HEK293 (cell line): ENCODE measurements at regions of chr11 and their contacts with region 1.

Region 1: DNA sequence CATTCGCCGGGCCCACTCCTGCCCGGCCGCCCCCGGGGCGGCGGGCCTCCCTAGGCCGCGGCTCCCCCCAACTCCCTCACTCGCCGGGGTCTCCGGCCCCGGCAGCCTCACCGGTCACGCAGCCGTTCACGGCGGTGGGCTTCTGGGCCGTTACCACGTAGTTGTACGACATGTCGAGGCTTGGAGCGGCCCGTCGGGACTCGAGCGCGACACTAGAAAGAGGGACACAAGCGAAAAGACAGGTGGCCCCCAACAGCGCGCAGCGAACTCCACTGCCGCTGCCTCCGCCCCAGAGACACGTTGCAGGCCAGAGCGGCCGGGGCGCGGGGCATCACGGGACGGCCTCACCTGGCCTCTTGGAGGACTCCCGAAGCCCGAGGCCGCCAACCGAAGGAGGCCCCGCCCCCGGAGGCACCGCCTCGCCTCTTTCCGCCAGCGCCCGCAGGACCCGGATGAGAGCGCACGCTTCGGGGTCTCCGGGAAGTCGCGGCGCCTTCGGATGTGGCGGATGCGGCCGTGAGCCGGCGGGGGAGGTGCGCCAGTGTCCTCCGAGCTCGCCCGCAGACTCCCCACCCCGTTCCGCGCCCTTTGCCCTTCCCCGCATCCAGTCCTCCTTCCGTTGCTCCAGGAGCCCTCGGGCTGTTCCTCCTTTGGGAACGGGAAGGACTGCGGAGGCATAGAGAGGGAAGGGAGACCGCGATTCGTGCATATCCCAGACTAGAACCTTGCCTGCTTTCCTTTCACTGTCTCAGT is at the starts of genes DDB1 and TKFC:
- H3K4me3 ChIP-seq: peak within 1 kb of the TSS; percentile 99
- H3K27ac ChIP-seq: peak within 1 kb of the TSS; percentile 69
- H3K4me1 ChIP-seq: no peaks in the 10 kb centered on the region
- CTCF ChIP-seq: no peak; the same call in 1 of the 2 replicates

Region 2: GRCh38 chr11:61279934-61280659 is 52.9 kb before region 1 on chr11:
- CTCF ChIA-PET with region 1: no interaction called
- POLR2A ChIA-PET with region 1: no interaction called
- H3K4me3 ChIP-seq: no peak overlapping the region
- H3K27ac ChIP-seq: no peak overlapping the region
- H3K4me1 ChIP-seq: no peaks in the 10 kb centered on the region
- CTCF ChIP-seq: no peak

Region 3: DNA sequence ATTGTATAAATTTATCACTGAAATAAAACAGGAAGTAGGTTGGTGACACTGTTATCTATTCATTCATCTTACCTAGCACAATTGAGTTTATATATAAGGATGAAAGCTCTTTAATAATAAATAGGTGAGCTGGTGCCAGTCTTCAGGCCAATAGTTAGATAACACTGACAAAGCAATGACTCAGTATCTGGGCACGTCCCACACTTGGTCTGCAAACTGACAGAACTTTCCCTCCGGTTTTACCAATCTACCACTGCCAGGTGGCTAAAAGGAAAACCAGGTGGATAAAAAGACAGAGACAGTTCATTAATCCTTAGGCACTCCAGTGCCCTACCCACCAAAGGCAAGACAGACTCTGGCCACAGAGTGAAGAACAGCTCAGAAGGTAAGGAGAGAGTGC is 17.7 kb before region 1 on chr11:
- CTCF ChIA-PET with region 1: interaction called, 11 read pairs
- POLR2A ChIA-PET with region 1: interaction called, 3 read pairs
- H3K4me3 ChIP-seq: no peak overlapping the region
- H3K27ac ChIP-seq: no peak overlapping the region
- H3K4me1 ChIP-seq: no peaks in the 10 kb centered on the region
- CTCF ChIP-seq: no peak

Region 4: GRCh38 chr11:61361686-61362541 is 28.9 kb after region 1 on chr11 and contains the starts of genes CYB561A3 and TMEM138:
- CTCF ChIA-PET with region 1: interaction called, 69 read pairs
- POLR2A ChIA-PET with region 1: interaction called, 56 read pairs
- H3K4me3 ChIP-seq: peak within 1 kb of the TSS; percentile 65
- H3K27ac ChIP-seq: peak within 1 kb of the TSS; percentile 94
- H3K4me1 ChIP-seq: peaks cover 2% of the 10 kb centered on the region; the same call in 1 of the 2 replicates
- CTCF ChIP-seq: no peak

Region 5: GRCh38 chr11:61384271-61385242 is 51.6 kb after region 1 on chr11:
- CTCF ChIA-PET with region 1: interaction called, 210 read pairs
- POLR2A ChIA-PET with region 1: interaction called, 35 read pairs
- H3K4me3 ChIP-seq: no peak overlapping the region
- H3K27ac ChIP-seq: no peak overlapping the region
- H3K4me1 ChIP-seq: no peaks in the 10 kb centered on the region
- CTCF ChIP-seq: no peak

Region 6: DNA sequence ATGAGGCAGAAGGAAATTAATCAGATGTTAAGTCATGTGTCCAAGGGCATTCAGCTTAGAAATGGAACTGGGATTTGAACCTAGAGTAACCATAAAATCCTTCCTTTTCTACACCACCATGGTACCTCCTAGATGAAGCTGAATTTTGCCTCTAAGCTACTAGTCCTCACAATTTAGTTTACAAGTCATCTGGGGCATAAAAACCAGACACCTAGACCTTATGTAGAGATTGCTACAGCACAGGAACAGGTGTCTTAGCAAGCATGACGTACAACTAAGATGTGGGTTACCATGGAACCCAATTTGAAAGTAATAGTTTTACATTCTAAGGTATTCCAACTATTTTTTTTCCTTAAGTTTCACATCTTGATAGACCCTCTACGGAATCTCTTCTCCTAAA is 68.6 kb after region 1 on chr11:
- CTCF ChIA-PET with region 1: interaction called, 12 read pairs
- POLR2A ChIA-PET with region 1: no interaction called
- H3K4me3 ChIP-seq: no peak overlapping the region
- H3K27ac ChIP-seq: no peak overlapping the region
- H3K4me1 ChIP-seq: no peaks in the 10 kb centered on the region
- CTCF ChIP-seq: no peak

Region 7: DNA sequence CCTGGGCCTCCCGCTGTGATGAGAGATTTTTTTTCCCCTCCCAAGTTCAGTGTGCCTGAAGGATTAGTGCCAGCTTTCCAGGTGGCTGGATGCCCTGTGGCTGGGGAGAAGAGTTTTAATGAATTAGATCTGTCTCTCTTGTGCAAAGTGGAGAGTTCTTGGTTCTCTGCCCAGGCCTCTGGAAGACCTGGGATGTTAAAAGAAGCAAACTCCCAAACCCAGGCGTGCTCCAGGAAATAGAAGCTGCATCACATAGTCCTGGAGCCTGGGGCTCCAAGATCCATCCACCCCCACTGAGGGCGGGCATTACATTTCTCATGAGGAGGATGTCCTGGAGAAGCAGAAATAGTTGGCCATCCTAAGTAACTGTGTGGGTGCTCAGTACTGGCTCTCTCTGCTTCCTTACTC is 127.5 kb after region 1 on chr11:
- CTCF ChIA-PET with region 1: no interaction called
- POLR2A ChIA-PET with region 1: no interaction called
- H3K4me3 ChIP-seq: no peak overlapping the region
- H3K27ac ChIP-seq: no peak overlapping the region
- H3K4me1 ChIP-seq: no peaks in the 10 kb centered on the region
- CTCF ChIP-seq: no peak

Region 8: DNA sequence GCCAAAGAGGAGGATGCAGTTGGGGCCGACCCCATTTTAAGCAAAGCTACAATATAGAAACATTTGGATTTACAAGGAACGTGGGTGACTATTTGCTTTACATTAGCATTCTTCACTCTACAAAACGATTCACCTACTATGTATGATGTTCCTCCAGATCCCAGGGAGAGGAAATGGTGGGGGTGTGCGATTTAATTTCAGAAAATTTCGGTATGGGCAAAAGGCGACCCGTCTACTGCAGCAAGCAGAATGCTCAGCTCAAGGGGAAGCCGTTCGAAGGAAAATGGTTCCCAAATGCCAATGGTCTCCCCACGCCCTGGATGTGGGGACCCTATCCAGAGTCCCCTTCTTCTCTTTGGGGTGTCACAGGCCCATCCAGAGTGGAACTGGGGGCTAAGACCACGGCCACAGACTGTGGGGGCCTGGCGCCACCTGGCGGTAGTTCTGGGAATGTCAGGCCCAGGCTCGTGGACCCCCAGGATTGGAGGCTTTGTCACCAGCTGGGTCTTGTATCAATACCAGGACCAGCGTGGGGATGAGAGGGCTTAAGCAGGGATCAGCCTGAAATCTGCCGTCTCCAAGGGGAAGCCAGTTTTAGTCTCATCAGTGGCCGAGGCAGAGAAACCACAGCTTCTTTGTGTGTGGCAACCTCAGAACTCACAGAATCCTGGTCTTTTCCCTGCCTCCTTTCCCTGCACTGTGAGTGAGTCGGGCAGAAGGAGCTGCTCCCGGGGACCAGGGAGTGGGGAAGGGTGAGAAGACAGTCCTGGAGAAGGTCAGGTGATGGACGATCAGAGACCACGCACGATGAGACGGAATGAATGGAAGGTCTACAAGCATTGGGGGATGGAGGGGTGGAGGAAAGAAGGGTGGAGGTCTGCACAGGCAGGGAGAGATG is 184.0 kb after region 1 on chr11:
- CTCF ChIA-PET with region 1: interaction called, 19 read pairs
- POLR2A ChIA-PET with region 1: no interaction called
- H3K4me3 ChIP-seq: no peak overlapping the region
- H3K27ac ChIP-seq: no peak overlapping the region
- H3K4me1 ChIP-seq: no peaks in the 10 kb centered on the region
- CTCF ChIP-seq: peak; percentile 80